ENCODE measurements at regions of chr9 and their contacts with region 1.

Region 1: DNA sequence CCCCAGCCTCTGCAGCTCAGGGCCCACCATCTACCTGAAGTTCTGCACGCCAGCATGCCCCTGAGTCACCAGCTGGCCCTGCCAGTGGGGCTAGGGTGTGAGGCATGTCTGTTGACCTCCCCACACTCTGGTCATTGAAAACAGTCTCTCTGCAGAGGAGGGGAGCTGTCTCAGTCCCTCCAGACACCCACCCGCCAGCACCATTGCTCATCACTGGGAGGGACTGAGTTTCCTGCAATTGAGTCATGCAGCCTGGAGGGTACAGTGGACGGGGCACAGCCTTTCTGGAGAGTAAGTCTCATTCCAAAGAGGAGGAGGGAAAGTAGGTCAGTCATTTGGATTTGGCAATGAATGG is 16.8 kb upstream of the COL5A1 start:
- DNase-seq: peak in 1 of 2 experiments; percentile 76
- H3K4me3 ChIP-seq: no peak overlapping the region
- H3K27ac ChIP-seq: no peak overlapping the region
- H3K4me1 ChIP-seq: peaks cover 23% of the 10 kb centered on the region
- H3K27me3 ChIP-seq: peaks cover 6% of the 10 kb centered on the region
- CTCF ChIP-seq: no peak

Region 2: DNA sequence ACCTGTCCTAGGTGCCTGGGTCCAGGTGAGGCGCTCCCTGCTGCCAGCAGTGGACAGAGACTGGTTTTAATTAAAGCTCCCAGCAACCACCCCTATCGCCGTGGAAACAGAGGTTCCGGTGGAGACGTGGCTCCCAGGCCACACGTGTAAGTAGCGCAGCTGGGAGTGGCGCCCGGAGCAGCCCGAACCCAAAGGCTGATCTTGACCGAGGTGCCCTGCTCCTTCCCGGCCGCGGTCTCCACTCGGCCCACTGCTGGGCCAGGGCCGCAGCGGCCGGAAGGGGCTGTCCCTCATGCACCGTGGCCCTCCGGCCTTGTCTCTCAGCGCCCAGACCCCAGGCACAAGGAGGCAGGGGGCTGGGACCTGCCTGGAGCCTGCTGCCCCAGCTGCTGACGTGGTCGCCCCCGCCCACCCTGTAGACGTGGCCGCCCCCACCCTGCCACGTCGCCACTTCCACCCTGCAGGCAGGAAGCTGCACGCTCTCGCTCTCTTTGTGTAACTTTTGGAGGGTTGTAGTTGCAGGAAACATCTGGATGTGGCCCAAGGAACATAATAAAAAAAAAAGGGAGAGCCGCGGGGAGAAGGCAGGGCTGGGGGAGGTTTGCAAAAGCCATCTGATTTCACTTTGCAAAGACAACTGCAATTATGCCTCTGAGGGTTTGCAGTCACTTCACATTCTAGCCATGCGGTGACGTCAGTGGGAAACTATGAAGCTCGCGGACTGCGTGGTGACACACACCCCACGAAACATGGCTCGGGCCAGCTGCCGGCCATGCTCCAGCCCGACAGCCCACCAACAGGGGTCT is 168.7 kb before region 1 on chr9:
- CTCF ChIA-PET with region 1: no interaction called
- POLR2A ChIA-PET with region 1: no interaction called
- intact Hi-C with region 1: loop called (anchors 1 kb)
- DNase-seq: peak; percentile 51 to 79
- H3K4me3 ChIP-seq: no peak overlapping the region
- H3K27ac ChIP-seq: no peak overlapping the region
- H3K4me1 ChIP-seq: no peaks in the 10 kb centered on the region
- H3K27me3 ChIP-seq: 0 out of 2 replicates have a peak, but pooled peaks cover 5% of the 10 kb centered on the region
- CTCF ChIP-seq: no peak

Region 3: DNA sequence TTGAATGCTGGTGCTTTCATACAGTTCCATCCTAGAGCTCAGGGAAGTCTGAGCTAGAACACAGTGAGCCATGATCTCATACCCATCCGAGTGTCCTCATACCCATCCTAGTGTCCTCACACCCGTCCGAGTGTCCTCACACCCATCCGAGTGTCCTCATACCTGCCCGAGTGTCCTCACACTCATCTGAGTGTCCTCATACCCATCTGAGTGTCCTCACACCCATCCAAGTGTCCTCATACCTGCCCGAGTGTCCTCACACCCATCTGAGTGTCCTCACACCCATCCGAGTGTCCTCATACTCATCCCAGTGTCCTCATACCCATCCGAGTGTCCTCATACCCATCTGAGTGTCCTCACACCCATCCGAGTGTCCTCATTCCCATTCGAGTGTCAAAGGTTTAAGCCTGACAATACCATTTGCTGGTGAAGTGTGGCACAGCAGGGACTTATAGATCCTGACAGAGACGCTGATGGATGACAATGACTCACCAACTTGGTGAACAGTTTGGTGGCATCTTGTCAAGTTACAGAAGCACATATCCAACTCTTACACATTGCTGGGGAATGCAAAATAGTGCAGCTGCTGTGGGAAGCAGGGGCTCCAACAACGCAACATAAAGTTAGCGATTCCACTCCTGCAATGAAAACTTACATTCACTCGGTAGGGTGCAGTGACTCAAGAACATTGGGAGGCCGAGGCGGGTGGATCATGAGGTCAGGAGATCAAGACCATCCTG is 60.2 kb before region 1 on chr9:
- CTCF ChIA-PET with region 1: no interaction called
- POLR2A ChIA-PET with region 1: no interaction called
- intact Hi-C with region 1: no loop called
- DNase-seq: peak in 1 of 2 experiments; percentile 57
- H3K4me3 ChIP-seq: no peak overlapping the region
- H3K27ac ChIP-seq: no peak overlapping the region
- H3K4me1 ChIP-seq: no peaks in the 10 kb centered on the region
- H3K27me3 ChIP-seq: peaks cover 66% of the 10 kb centered on the region
- CTCF ChIP-seq: no peak

Measured in PC-9 (cell line).